Mammary epithelial cell (primary cell): ENCODE measurements at regions of chr10 and their contacts with region 1.

Region 1: GRCh38 chr10:110497438-110498086 is at the start of gene DUSP5:
- DNase-seq: peak; percentile 96
- H3K4me3 ChIP-seq: peak within 1 kb of the TSS; percentile 80 to 90 (median 82)
- H3K27ac ChIP-seq: peak within 1 kb of the TSS; percentile 92
- H3K4me1 ChIP-seq: peaks cover 49% of the 10 kb centered on the region
- H3K27me3 ChIP-seq: no peaks in the 10 kb centered on the region
- CTCF ChIP-seq: no peak
- total RNA-seq, gene DUSP5: 18.0 to 107 TPM

Region 2: DNA sequence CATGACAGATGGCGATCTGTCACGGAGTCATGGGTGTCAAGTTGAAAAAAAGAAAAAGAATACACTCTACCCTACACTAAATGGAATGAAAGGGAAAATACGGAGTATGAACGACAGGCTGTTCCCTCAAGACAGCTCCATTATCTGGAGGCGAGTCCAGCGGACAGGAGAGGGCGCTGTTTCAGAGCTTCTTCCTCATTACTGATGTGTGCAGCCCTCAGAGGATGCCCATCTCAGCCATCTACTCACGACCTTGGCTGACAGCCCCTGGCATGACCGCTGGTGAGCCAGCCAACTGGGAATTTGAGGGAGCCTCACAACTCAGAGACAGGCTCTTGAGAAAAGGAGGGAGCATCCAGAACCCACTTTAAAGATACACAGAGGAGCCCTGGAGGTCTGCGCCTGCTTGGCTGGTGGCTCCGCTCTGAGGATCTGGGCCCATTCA is 143.2 kb before region 1 on chr10:
- CTCF ChIA-PET with region 1: interaction called, 11 read pairs
- dilution Hi-C with region 1: no loop called
- in situ Hi-C with region 1: loop called (anchors 5 kb)
- intact Hi-C with region 1: loop called (anchors 1 kb)
- DNase-seq: peak; percentile 87
- H3K4me3 ChIP-seq: peak overlapping the region; percentile 25 to 33 (median 32)
- H3K27ac ChIP-seq: peak overlapping the region; percentile 99
- H3K4me1 ChIP-seq: peaks cover 59% of the 10 kb centered on the region
- H3K27me3 ChIP-seq: no peaks in the 10 kb centered on the region
- CTCF ChIP-seq: peak; percentile 83 to 86

Region 3: DNA sequence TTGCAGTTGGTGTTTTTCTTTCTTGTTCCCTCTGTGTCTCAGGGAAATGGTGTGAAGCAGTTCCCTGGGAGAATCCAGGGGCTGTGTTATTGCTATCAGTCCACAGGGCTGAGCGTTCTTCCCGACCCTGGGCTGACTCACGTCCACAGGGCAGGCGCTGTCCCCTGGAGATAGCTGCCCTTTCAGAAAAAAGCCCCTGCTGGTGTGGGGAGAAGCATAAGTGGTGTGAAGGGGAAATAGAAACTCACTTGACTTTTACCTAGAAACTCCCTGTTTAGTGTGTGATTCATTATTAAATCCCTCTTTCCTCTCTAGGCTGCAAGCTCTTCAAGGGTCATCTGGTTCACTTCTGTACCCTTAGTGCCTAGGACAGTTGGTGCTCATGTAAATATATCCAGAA is 129.6 kb before region 1 on chr10:
- CTCF ChIA-PET with region 1: no interaction called
- dilution Hi-C with region 1: no loop called
- in situ Hi-C with region 1: no loop called
- intact Hi-C with region 1: no loop called
- DNase-seq: no peak
- H3K4me3 ChIP-seq: no peak overlapping the region
- H3K27ac ChIP-seq: no peak overlapping the region
- H3K4me1 ChIP-seq: peaks cover 38% of the 10 kb centered on the region
- H3K27me3 ChIP-seq: no peaks in the 10 kb centered on the region
- CTCF ChIP-seq: no peak

Region 4: GRCh38 chr10:110456523-110457091 is 41.0 kb before region 1 on chr10:
- CTCF ChIA-PET with region 1: no interaction called
- dilution Hi-C with region 1: no loop called
- in situ Hi-C with region 1: no loop called
- intact Hi-C with region 1: loop called (anchors 2 kb)
- DNase-seq: peak; percentile 64
- H3K4me3 ChIP-seq: no peak overlapping the region
- H3K27ac ChIP-seq: no peak overlapping the region
- H3K4me1 ChIP-seq: peaks cover 34% of the 10 kb centered on the region
- H3K27me3 ChIP-seq: no peaks in the 10 kb centered on the region
- CTCF ChIP-seq: no peak

Region 5: GRCh38 chr10:110783509-110784107 is 286.0 kb after region 1 on chr10:
- CTCF ChIA-PET with region 1: no interaction called
- dilution Hi-C with region 1: no loop called
- in situ Hi-C with region 1: no loop called
- intact Hi-C with region 1: no loop called
- DNase-seq: no peak
- H3K4me3 ChIP-seq: no peak overlapping the region
- H3K27ac ChIP-seq: no peak overlapping the region
- H3K4me1 ChIP-seq: no peaks in the 10 kb centered on the region
- H3K27me3 ChIP-seq: no peaks in the 10 kb centered on the region
- CTCF ChIP-seq: no peak